Dorsolateral prefrontal cortex (tissue), 120 donors: ENCODE measurements at regions of chr17 and their contacts with region 1.

Region 1: DNA sequence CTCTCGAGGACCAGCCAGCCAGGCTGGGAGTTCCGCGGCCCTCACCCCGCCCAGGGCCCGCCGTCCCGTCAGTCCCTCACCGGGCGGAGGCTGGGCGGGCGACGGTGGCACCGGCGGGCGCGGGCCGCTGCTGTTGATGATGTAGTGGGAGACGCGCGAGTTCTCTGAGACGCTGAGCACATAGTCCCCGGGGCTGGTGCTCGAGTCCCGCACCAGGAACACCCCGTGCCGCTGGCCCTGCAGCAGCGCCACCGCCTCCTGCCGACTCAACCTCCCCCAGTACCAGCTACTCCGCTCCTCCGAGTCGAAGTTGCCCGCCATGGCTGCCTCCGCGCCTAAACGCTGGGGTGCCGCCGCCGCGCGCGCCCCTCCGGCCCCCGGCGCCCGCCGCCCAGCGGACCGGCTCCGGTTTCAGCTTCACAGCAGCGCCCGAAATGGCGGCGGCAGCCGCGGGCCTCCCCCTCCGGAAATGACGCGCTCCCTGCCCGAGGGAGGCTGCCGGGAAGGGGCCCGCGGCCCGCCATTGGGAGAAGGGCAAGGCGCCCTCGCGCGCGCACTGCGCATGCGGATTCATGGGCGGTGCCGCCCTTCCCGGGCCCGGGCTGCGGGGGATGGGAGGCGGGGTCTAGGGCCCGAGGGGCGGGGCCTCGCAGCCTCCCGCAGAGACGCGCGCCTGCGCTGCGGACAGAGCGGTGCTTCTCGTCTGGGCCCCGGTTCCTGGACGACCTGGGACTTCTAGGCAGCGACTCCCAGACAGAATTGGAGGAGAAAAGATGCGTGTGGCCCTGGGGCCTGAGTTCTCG is at the start of gene CRK:
- DNase-seq: peak; percentile 89 to 98 (median 95)
- H3K4me3 ChIP-seq: peak within 1 kb of the TSS; percentile 59 to 100 (median 96)
- H3K27ac ChIP-seq: peak within 1 kb of the TSS; percentile 35 to 98 (median 93)
- H3K27me3 ChIP-seq: no peaks in the 10 kb centered on the region
- CTCF ChIP-seq: peak in 39 of 56 donors; percentile 9 to 69 (median 33)
- total RNA-seq, gene CRK: 37.2 to 62.1 (median 49.0) TPM

Region 2: DNA sequence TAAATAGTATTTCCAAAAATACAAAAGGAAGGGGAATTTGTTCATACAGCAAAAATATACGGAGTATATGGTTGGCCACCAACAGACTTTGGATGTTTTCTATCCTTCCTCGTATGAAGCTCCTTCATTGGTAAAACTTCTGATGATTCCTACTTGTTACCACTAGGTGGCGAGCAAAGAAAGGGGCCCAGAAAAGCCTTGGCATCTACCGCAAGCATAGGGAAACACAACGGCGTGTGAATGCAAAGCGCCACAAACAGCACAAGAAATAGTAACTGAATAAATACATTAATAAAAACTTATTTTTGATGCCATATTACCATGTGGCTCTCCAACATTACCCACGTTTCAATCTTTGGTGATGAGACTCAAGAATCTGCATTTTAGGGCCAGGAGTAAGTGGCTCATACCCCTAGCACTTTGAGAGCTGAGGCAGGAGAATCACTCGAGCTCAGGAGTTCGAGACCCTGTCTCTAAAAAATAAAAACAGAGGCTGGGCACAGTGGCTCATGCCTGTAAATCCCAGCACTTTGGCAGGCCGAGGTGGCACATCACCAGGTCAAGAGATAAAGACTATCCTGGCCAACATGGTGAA is 90.5 kb before region 1 on chr17:
- intact Hi-C with region 1: loop called (anchors 2 kb)
- DNase-seq: peak in 6 of 10 donors; percentile 43 to 71 (median 51)
- H3K4me3 ChIP-seq: peak overlapping the region in 19 of 59 donors; percentile 0 to 38 (median 15)
- H3K27ac ChIP-seq: peak overlapping the region in 18 of 59 donors; percentile 1 to 57 (median 35)
- H3K27me3 ChIP-seq: no peaks in the 10 kb centered on the region
- CTCF ChIP-seq: peak; percentile 72 to 99 (median 89)

Region 3: GRCh38 chr17:1399679-1400512 is 56.1 kb before region 1 on chr17 and contains the start of gene YWHAE:
- intact Hi-C with region 1: loop called (anchors 1 to 2 kb)
- DNase-seq: peak; percentile 93 to 97 (median 95)
- H3K4me3 ChIP-seq: peak within 1 kb of the TSS; percentile 62 to 92 (median 80)
- H3K27ac ChIP-seq: peak within 1 kb of the TSS; percentile 80 to 99 (median 98)
- H3K27me3 ChIP-seq: no peaks in the 10 kb centered on the region
- CTCF ChIP-seq: peak in 16 of 56 donors; percentile 7 to 52 (median 18)
- total RNA-seq, gene YWHAE: 537 to 1,262 (median 829) TPM

Region 4: DNA sequence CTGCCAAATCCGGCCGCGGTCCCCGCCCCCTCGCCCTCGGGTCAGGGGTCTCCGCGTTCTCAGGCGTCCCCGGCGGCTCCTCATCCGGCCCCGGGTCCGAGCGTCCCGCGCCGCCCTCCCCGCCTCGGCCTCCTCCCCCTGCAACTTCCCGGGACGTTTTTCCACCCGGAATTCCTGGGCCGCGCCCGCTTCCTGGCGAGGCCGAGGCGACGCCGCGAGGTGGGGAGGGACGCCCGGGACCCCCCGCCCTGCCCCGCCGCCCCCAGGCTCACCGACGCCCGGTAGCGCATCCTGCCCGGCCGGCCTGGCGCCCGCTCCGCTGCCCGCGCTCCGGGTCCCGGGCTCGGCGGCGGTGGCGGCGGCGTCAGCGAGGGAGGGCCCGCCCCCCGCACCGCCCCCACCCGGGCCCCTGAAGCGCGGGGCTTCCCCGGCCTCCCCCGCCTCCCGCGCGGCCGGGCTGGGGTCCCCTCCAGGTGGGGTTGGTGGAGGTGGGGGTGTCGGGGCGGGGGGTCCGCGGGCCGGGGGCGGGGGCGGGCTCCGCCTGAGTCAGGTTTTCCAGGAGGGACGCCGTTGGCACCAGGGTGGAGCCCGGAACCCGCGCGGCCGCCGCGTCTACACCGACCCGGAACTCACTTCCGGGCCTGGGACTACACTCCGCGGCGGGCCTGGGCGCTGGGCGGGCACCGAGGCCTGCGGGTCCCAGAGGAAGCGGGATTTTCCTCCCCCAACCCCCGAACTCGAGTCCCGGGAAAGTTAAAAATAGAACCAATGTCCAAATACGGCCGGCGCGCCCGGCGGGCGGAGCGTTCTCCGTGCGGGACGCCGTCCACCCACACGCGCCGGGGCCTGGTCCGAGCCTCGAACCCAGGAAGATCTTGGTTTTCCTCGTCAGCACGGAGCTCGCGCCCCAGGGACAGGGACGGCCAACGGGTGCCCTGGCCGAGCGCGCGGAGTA is 29.7 kb after region 1 on chr17:
- intact Hi-C with region 1: loop called in 1 of 2 experiments (anchors 2 kb)
- DNase-seq: no peak
- H3K4me3 ChIP-seq: peak overlapping the region; percentile 42 to 79 (median 63)
- H3K27ac ChIP-seq: peak overlapping the region in 50 of 59 donors; percentile 1 to 92 (median 76)
- H3K27me3 ChIP-seq: no peaks in the 10 kb centered on the region
- CTCF ChIP-seq: no peak

Region 5: DNA sequence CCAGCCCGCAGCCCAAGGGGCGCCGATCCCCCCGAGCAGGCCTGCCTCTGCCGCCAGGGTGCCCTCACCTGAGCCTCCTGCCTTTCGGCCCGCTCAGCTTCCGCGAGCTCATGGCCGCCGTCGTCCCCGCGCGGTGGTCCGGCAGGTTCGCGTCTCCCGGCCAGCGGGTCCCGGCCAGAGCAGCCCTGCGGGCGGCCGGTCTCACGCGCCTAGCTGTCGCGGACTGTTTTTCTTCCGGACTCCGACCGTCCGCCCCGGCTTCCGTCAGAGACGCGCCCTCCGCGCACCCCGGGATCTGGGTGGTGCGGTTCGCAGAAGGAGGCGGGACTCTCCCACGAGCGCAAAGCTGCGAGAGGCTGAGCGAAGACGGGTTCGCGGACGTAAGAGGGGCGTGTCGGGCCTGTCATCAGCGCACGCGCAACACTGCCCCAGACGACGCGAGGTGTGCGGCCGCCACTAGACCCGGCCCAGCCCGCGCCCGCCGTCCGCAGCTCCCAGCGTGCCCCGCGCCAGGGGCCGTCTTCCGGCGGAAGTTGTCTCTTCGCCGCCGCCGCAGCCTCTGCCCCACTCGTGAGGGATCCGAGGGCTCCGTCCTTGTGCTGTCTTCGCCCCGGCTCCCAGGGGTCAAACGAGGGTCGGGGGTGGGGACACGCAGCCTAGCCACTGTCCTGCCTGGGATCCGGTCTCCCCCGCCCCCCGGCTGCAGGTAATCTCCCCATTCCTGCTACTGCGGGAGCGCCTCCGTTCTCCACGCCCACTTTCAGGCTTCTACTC is 60.6 kb after region 1 on chr17 and contains the start of gene INPP5K:
- intact Hi-C with region 1: loop called (anchors 2 kb)
- DNase-seq: peak; percentile 96 to 99 (median 98)
- H3K4me3 ChIP-seq: peak within 1 kb of the TSS; percentile 67 to 100 (median 96)
- H3K27ac ChIP-seq: peak within 1 kb of the TSS in 58 of 59 donors; percentile 51 to 98 (median 90)
- H3K27me3 ChIP-seq: no peaks in the 10 kb centered on the region
- CTCF ChIP-seq: peak in 40 of 56 donors; percentile 4 to 64 (median 29)
- total RNA-seq, gene INPP5K: 28.5 to 70.6 (median 43.8) TPM

Region 6: GRCh38 chr17:1561400-1562175 is 105.6 kb after region 1 on chr17:
- intact Hi-C with region 1: loop called in 1 of 2 experiments (anchors 5 kb)
- DNase-seq: no peak
- H3K4me3 ChIP-seq: peak overlapping the region; percentile 49 to 94 (median 75)
- H3K27ac ChIP-seq: peak overlapping the region in 51 of 59 donors; percentile 9 to 91 (median 69)
- H3K27me3 ChIP-seq: no peaks in the 10 kb centered on the region
- CTCF ChIP-seq: peak in 9 of 56 donors; percentile 6 to 27 (median 12)